GM10248 (cell line): ENCODE measurements at regions of chr11 and their contacts with region 1.

Region 1: GRCh38 chr11:75399344-75400145 is at the start of gene RPS3:
- DNase-seq: peak; percentile 93
- CTCF ChIP-seq: peak; percentile 13

Region 2: DNA sequence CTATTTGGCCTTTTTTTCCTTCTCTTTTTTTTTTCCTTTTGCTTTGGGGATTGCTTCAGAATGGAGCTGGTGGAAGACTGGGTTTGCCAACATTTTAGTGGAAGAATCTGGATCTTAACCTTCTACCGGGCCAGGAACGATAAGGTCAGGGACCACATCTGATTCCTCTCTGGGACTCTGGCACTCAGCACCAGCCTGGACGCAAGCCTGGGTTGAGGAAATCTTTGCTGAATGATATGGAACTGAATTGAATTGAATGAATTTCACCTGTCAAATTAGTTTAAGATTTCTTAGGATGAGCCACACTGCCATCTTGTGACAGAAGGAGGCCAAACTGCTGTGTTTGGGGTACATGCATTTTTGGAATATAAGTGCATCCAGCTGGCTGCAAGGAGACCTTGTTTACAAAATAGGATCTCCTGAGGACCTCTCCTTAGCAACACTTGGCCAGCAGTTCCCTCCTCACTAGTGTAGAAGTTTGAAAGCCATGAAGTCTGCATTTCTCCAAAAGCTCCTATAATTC is 128.6 kb before region 1 on chr11:
- CTCF ChIA-PET with region 1: no interaction called
- POLR2A ChIA-PET with region 1: no interaction called
- DNase-seq: no peak
- CTCF ChIP-seq: peak; percentile 49

Region 3: GRCh38 chr11:75413864-75414263 is 14.3 kb after region 1 on chr11:
- CTCF ChIA-PET with region 1: interaction called, 10 read pairs
- POLR2A ChIA-PET with region 1: interaction called, 10 read pairs
- DNase-seq: no peak
- CTCF ChIP-seq: no peak